Activated CD4-positive, alpha-beta T cell treated with anti-CD3 and anti-CD28 coated beads, Interleukin-2, amount 10 ng/mL, durations not matched to agents 24 days and 14 days (primary cell): ENCODE measurements at regions of chr16 and their contacts with region 1.

Region 1: DNA sequence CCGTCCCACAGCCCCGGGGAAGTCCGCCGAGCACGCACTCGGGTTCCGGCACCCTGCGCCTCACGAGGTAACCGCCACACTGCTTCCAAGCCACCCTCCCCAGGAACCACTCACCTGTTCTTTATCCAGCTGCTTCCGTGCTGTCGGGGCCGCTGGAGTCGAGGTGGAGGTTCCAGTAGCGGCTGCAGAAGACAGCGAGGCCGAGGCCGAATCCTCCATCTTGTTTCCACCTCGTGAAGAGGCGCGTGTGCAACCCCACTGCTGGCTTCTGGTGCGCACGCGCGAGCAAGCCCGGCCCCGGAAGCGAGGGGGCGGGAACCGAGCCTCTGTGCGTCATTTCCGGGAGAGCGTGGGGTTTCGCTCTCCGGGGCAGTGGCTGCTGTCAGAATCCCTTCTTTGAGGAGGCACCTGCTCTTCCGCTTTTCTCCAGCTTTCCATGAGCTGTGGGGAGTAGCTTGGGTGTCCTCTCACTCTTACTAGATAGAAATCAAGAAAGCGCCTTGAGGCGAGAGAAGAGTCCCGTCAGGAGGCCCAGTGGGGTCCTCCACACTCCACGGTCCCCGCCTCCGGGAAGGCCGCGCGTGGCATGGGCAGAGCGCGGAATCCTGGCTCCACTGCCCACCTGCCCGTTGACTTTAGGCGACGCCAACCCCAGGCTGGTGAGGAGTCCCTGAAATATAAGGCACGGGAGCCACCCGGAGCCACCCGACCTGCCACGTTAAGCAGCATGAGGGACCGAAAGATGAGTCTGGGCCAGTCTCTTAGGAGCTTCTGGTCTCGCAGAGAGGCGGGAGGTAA is at the start of gene RSL1D1:
- DNase-seq: peak; percentile 99
- H3K4me3 Mint-ChIP-seq: peak within 1 kb of the TSS; percentile 99
- H3K27ac Mint-ChIP-seq: peak within 1 kb of the TSS; percentile 98
- H3K4me1 Mint-ChIP-seq: peaks cover 47% of the 10 kb centered on the region
- H3K27me3 Mint-ChIP-seq: no peaks in the 10 kb centered on the region
- total RNA-seq, gene RSL1D1: 375 and 379 TPM in 2 replicates

Region 2: GRCh38 chr16:11783319-11784037 is 68.0 kb before region 1 on chr16:
- intact Hi-C with region 1: loop called (anchors 1 kb)
- DNase-seq: peak; percentile 89
- H3K4me3 Mint-ChIP-seq: peak overlapping the region; percentile 82
- H3K27ac Mint-ChIP-seq: peak overlapping the region; percentile 97
- H3K4me1 Mint-ChIP-seq: peaks cover 61% of the 10 kb centered on the region
- H3K27me3 Mint-ChIP-seq: no peaks in the 10 kb centered on the region

Region 3: GRCh38 chr16:11797166-11797956 is 54.1 kb before region 1 on chr16 and contains the start of gene ZC3H7A:
- intact Hi-C with region 1: loop called (anchors 1 kb)
- DNase-seq: peak; percentile 98
- H3K4me3 Mint-ChIP-seq: peak within 1 kb of the TSS; percentile 93
- H3K27ac Mint-ChIP-seq: peak within 1 kb of the TSS; percentile 95
- H3K4me1 Mint-ChIP-seq: peaks cover 69% of the 10 kb centered on the region
- H3K27me3 Mint-ChIP-seq: no peaks in the 10 kb centered on the region
- total RNA-seq, gene ZC3H7A: 58.3 and 64.1 TPM in 2 replicates

Region 4: GRCh38 chr16:12067714-12068401 is 216.4 kb after region 1 on chr16:
- intact Hi-C with region 1: loop called (anchors 10 kb)
- DNase-seq: peak; percentile 89
- H3K4me3 Mint-ChIP-seq: no peak overlapping the region
- H3K27ac Mint-ChIP-seq: no peak overlapping the region
- H3K4me1 Mint-ChIP-seq: peaks cover 2% of the 10 kb centered on the region
- H3K27me3 Mint-ChIP-seq: no peaks in the 10 kb centered on the region